ENCODE measurements at regions of chr1 and their contacts with region 1.

Region 1: DNA sequence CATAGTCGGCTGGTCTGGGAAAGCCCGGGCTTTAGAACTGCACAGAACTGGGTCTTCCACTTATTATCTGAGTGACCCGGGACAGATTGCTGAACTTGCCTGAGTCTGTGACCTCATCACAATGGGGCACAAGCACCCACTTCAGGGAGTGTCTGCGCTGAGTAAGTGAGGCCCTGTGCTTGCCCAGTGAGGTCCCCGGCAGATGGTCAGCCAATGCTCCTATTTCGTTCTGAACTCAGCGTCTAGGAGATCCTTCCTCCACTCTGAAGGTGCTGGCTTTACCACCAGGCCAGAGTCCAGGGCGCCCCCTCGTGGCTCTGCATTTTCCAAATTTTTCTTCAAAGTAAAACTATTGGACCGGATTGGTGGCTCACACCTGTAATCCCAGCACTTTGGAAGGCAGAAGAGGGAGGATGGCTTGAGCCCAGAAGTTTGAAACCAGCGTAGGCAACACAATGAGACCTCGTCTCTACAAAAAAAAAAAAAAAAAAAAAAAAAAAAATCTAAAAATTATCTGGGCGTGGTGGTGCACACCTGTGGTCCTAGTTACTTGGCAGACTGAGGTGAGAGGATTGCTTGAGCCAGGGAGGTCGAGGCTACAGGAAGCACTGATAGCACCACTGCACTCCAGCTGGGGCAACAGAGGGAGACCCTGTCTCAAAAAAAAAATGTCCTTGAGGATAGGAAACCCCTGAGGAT is 61.7 kb downstream of the FCRL5 start:
- DNase-seq: peak; percentile 43 to 82 (median 47)
- ATAC-seq: peak; percentile 84
- H3K4me3 ChIP-seq: no peak overlapping the region
- H3K27ac ChIP-seq: no peak overlapping the region
- H3K4me1 ChIP-seq: peaks cover 7 to 18% of the 10 kb centered on the region in 2 experiments; a peak in 4 of 5 replicates
- H3K27me3 ChIP-seq: peaks cover 0 to 9% of the 10 kb centered on the region in 2 experiments; a peak in 2 of 5 replicates
- CTCF ChIP-seq: peak; percentile 74 to 88 (median 85)
- EP300 ChIP-seq: no peak
- POLR2A ChIP-seq: no peak
- RAD21 ChIP-seq: peak; percentile 79 to 85

Region 2: DNA sequence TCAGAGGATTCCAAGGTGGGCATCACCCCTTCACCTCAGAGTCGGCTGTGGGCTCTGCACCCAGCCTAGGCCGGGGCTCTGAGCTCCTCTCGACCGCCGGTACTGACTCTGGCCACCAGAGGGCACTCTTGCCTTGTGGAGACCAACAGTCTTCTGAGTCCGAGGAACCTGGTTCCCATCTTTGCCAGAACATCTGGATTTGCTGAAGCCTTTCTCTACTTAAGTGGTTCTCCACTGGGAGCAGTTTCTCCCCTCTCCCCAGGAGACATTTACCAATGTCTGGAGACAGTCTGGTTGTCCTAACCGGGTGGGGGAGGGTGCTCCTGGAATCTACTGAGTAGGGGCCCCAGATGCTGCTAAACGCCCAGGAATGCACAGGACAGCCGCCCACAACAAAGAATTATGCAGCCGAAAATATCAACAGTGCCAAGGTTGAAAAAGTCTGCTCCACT is 400.4 kb before region 1 on chr1:
- CTCF ChIA-PET with region 1: interaction called, 5 read pairs
- POLR2A ChIA-PET with region 1: interaction called, 3 read pairs
- in situ Hi-C with region 1: loop called (anchors 10 kb)
- intact Hi-C with region 1: loop called (anchors 10 kb)
- DNase-seq: peak; percentile 81 to 88 (median 87)
- ATAC-seq: peak; percentile 96
- H3K4me3 ChIP-seq: no peak overlapping the region
- H3K27ac ChIP-seq: no peak overlapping the region
- H3K4me1 ChIP-seq: peaks cover 2 to 4% of the 10 kb centered on the region in 2 experiments; a peak in 2 of 5 replicates
- H3K27me3 ChIP-seq: no peaks in the 10 kb centered on the region
- CTCF ChIP-seq: peak; percentile 92 to 96 (median 95)
- EP300 ChIP-seq: no peak
- POLR2A ChIP-seq: no peak
- RAD21 ChIP-seq: peak; percentile 98 to 99

Region 3: GRCh38 chr1:157193702-157194391 is 296.8 kb before region 1 on chr1:
- CTCF ChIA-PET with region 1: interaction called, 37 read pairs
- POLR2A ChIA-PET with region 1: no interaction called
- in situ Hi-C with region 1: loop called (anchors 5 kb)
- intact Hi-C with region 1: loop called (anchors 1 kb)
- DNase-seq: peak; percentile 72 to 83 (median 75)
- ATAC-seq: peak; percentile 66
- H3K4me3 ChIP-seq: no peak overlapping the region
- H3K27ac ChIP-seq: no peak overlapping the region
- H3K4me1 ChIP-seq: peaks cover 2 to 11% of the 10 kb centered on the region in 2 experiments; a peak in 1 of 5 replicates
- H3K27me3 ChIP-seq: peaks cover 11 to 31% of the 10 kb centered on the region in 2 experiments; a peak in 4 of 5 replicates
- CTCF ChIP-seq: peak; percentile 78 to 90 (median 83)
- EP300 ChIP-seq: no peak
- POLR2A ChIP-seq: no peak
- RAD21 ChIP-seq: peak; percentile 74 to 85

Region 4: DNA sequence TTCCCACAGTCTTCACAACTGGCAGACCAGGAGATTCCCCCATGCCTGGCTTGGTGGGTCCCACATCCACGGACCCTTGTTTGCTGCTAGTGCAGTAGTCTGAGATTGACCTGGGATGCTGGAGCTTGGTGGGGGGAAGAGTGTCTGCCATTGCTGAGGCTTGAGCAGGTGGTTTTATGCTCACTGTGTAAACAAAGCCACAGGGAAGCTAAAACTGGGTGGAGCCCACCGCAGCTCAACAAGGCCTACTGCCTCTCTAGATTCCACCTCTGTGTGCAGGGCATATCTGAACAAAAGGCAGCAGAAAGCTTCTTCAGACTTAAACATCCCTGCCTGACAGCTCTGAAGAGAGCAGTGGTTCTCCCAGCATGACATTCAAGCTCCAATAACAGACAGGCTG is 175.1 kb before region 1 on chr1:
- CTCF ChIA-PET with region 1: interaction called, 25 read pairs
- POLR2A ChIA-PET with region 1: no interaction called
- in situ Hi-C with region 1: loop called (anchors 5 kb)
- intact Hi-C with region 1: loop called (anchors 1 kb)
- DNase-seq: no peak
- ATAC-seq: no peak
- H3K4me3 ChIP-seq: no peak overlapping the region
- H3K27ac ChIP-seq: no peak overlapping the region
- H3K4me1 ChIP-seq: peaks cover 9 to 21% of the 10 kb centered on the region in 2 experiments; a peak in 4 of 5 replicates
- H3K27me3 ChIP-seq: no peaks in the 10 kb centered on the region
- CTCF ChIP-seq: no peak
- EP300 ChIP-seq: no peak
- POLR2A ChIP-seq: no peak
- RAD21 ChIP-seq: no peak

Region 5: DNA sequence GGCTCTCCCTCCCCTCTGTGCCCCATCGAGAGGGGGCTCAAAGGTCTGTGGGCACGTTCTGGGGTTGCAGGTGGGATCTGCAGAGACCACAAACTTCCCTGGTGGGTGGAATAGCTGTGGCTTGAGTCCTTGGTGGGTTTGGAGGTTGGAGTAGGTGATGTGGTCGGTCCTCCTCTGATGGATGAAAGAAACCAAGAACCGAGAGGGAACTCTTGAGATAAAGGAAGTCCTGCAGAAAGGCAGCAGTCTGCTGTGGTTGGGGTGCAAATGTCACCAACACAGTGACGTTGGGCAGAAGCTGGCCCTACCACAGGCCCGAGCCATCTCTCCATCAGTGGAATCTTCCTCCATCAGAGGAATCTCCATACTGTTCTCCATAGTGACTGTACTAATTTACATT is 110.1 kb before region 1 on chr1:
- CTCF ChIA-PET with region 1: interaction called, 7 read pairs
- POLR2A ChIA-PET with region 1: no interaction called
- in situ Hi-C with region 1: loop called (anchors 5 kb)
- intact Hi-C with region 1: loop called (anchors 1 kb)
- DNase-seq: no peak
- ATAC-seq: no peak
- H3K4me3 ChIP-seq: no peak overlapping the region
- H3K27ac ChIP-seq: no peak overlapping the region
- H3K4me1 ChIP-seq: peaks cover 3 to 14% of the 10 kb centered on the region in 2 experiments; a peak in 4 of 5 replicates
- H3K27me3 ChIP-seq: peaks cover 0 to 12% of the 10 kb centered on the region in 2 experiments; a peak in 2 of 5 replicates
- CTCF ChIP-seq: no peak
- EP300 ChIP-seq: no peak
- POLR2A ChIP-seq: no peak
- RAD21 ChIP-seq: no peak

Measured in K562 (cell line).